PC-3 (cell line): ENCODE measurements at regions of chr3 and their contacts with region 1.

Region 1: GRCh38 chr3:106988301-106988700 is 388.9 kb upstream of the CCDC54 start:
- DNase-seq: peak; percentile 22
- ATAC-seq: no peak
- H3K4me3 ChIP-seq: no peak overlapping the region
- H3K27ac ChIP-seq: no peak overlapping the region
- H3K4me1 ChIP-seq: no peaks in the 10 kb centered on the region
- H3K27me3 ChIP-seq: no peaks in the 10 kb centered on the region
- CTCF ChIP-seq: no peak

Region 2: GRCh38 chr3:107034142-107034541 is 45.8 kb after region 1 on chr3:
- CTCF ChIA-PET with region 1: no interaction called
- POLR2A ChIA-PET with region 1: no interaction called
- intact Hi-C with region 1: loop called (anchors 1 kb)
- DNase-seq: no peak
- ATAC-seq: no peak
- H3K4me3 ChIP-seq: no peak overlapping the region
- H3K27ac ChIP-seq: no peak overlapping the region
- H3K4me1 ChIP-seq: no peaks in the 10 kb centered on the region
- H3K27me3 ChIP-seq: no peaks in the 10 kb centered on the region
- CTCF ChIP-seq: no peak